ENCODE measurements at regions of chr7 and their contacts with region 1.

Region 1: DNA sequence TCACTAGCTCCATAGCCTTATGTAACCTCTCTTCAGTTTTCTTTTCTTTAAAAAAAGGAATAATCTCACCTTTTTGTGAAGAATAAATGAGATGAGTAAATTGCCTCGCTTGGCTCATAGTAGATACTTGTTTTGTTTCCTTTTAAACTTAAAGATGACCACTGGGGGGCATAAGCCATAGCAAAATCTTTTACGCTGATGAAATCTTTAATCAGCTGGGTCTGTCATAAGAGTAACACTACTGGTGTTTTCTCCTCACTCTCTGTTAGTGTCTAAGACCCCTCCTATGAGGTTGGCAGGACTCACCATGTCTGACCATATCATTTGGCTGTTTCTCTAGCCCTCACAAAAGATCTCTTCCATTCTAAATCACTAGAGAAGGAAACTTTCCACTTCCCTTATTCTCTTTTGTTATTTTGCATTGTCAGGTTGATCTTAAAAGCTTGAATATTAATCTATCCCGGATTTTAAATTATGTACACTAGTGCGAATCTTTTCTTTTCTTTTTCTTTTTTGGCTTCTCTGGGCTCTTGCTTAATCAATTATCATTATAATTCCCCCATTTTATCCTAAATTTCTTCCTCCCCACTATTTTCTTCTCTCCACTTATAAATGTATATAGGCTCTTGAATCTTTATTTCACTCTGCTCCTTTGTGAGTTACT is 12.5 kb downstream of the STAG3 start:
- DNase-seq: peak in 4 of 10 donors; percentile 25 to 68 (median 61)
- ATAC-seq: peak; percentile 83 to 93
- H3K4me3 Mint-ChIP-seq: no peak overlapping the region
- H3K27ac Mint-ChIP-seq: peak overlapping the region in 9 of 10 donors; percentile 14 to 88 (median 65)
- H3K4me1 Mint-ChIP-seq: peaks cover 9 to 55% (median 41%) of the 10 kb centered on the region in 4 donors
- H3K27me3 Mint-ChIP-seq: no peaks in the 10 kb centered on the region

Region 2: GRCh38 chr7:100208911-100209408 is 18.8 kb after region 1 on chr7:
- POLR2A ChIA-PET with region 1: interaction called, 10 read pairs
- DNase-seq: peak in 1 of 10 donors; percentile 39
- ATAC-seq: peak; percentile 7 to 32
- H3K4me3 Mint-ChIP-seq: peak overlapping the region; percentile 16 to 74 (median 69)
- H3K27ac Mint-ChIP-seq: peak overlapping the region; percentile 69 to 97 (median 90)
- H3K4me1 Mint-ChIP-seq: peaks cover 39 to 57% (median 56%) of the 10 kb centered on the region in 4 donors
- H3K27me3 Mint-ChIP-seq: no peaks in the 10 kb centered on the region

Region 3: GRCh38 chr7:100611974-100612729 is 422.0 kb after region 1 on chr7 and contains the start of gene MOSPD3:
- POLR2A ChIA-PET with region 1: no interaction called
- DNase-seq: peak; percentile 95 to 100 (median 98)
- ATAC-seq: peak; percentile 89 to 92
- H3K4me3 Mint-ChIP-seq: peak within 1 kb of the TSS; percentile 95 to 100 (median 98)
- H3K27ac Mint-ChIP-seq: peak within 1 kb of the TSS; percentile 96 to 100 (median 100)
- H3K4me1 Mint-ChIP-seq: peaks cover 10 to 23% (median 21%) of the 10 kb centered on the region in 4 donors
- H3K27me3 Mint-ChIP-seq: no peaks in the 10 kb centered on the region
- polyA plus RNA-seq, gene MOSPD3: 16.0 to 21.0 (median 20.0) TPM

Measured in naive thymus-derived CD8-positive, alpha-beta T cell (primary cell).